Esophagus muscularis mucosa (tissue), 4 donors: ENCODE measurements at regions of chr3 and their contacts with region 1.

Region 1: GRCh38 chr3:146544002-146544928 is at the start of gene PLSCR1:
- DNase-seq: peak; percentile 99
- H3K4me3 ChIP-seq: peak within 1 kb of the TSS; percentile 81 to 89 (median 86)
- H3K27ac ChIP-seq: peak within 1 kb of the TSS; percentile 95 to 98 (median 95)
- H3K4me1 ChIP-seq: peaks cover 12 to 48% (median 46%) of the 10 kb centered on the region in 4 donors
- H3K27me3 ChIP-seq: no peaks in the 10 kb centered on the region
- CTCF ChIP-seq: no peak
- EP300 ChIP-seq: peak; percentile 93
- POLR2A ChIP-seq: peak; percentile 82
- total RNA-seq, gene PLSCR1: 40.7 to 221 (median 58.2) TPM

Region 2: GRCh38 chr3:146469150-146470017 is 74.9 kb before region 1 on chr3 and contains the start of gene PLSCR2:
- intact Hi-C with region 1: loop called (anchors 5 kb)
- DNase-seq: no peak
- H3K4me3 ChIP-seq: peak within 1 kb of the TSS; percentile 63 to 83 (median 76)
- H3K27ac ChIP-seq: peak within 1 kb of the TSS; percentile 74 to 88 (median 79)
- H3K4me1 ChIP-seq: peaks cover 0 to 17% (median 11%) of the 10 kb centered on the region in 4 donors
- H3K27me3 ChIP-seq: no peaks in the 10 kb centered on the region
- CTCF ChIP-seq: no peak
- EP300 ChIP-seq: no peak
- POLR2A ChIP-seq: peak; percentile 20
- total RNA-seq, gene PLSCR2: 0.69 TPM in 1 of 4 donors, not detected in the others

Region 3: GRCh38 chr3:146646261-146646660 is 102.0 kb after region 1 on chr3:
- intact Hi-C with region 1: no loop called
- DNase-seq: no peak
- H3K4me3 ChIP-seq: no peak overlapping the region
- H3K27ac ChIP-seq: no peak overlapping the region
- H3K4me1 ChIP-seq: peaks cover 0 to 11% (median 1%) of the 10 kb centered on the region in 4 donors
- H3K27me3 ChIP-seq: no peaks in the 10 kb centered on the region
- CTCF ChIP-seq: no peak
- EP300 ChIP-seq: no peak
- POLR2A ChIP-seq: no peak

Region 4: GRCh38 chr3:146672941-146673340 is 128.7 kb after region 1 on chr3:
- intact Hi-C with region 1: no loop called
- DNase-seq: no peak
- H3K4me3 ChIP-seq: no peak overlapping the region
- H3K27ac ChIP-seq: no peak overlapping the region
- H3K4me1 ChIP-seq: no peaks in the 10 kb centered on the region
- H3K27me3 ChIP-seq: no peaks in the 10 kb centered on the region
- CTCF ChIP-seq: no peak
- EP300 ChIP-seq: no peak
- POLR2A ChIP-seq: no peak